ENCODE measurements at regions of chr19 and their contacts with region 1.

Region 1: GRCh38 chr19:35204799-35205732 is 23.5 kb downstream of the FAM187B start:
- DNase-seq: peak; percentile 52
- ATAC-seq: peak; percentile 75
- H3K4me3 Mint-ChIP-seq: peak overlapping the region; percentile 68
- H3K27ac Mint-ChIP-seq: peak overlapping the region; percentile 98
- H3K4me1 Mint-ChIP-seq: peaks cover 78% of the 10 kb centered on the region
- H3K27me3 Mint-ChIP-seq: no peaks in the 10 kb centered on the region
- CTCF ChIP-seq: no peak

Region 2: GRCh38 chr19:35167251-35167721 is 37.8 kb before region 1 on chr19:
- CTCF ChIA-PET with region 1: no interaction called
- POLR2A ChIA-PET with region 1: interaction called, 4 read pairs
- intact Hi-C with region 1: loop called (anchors 5 kb)
- DNase-seq: no peak
- ATAC-seq: peak; percentile 31
- H3K4me3 Mint-ChIP-seq: peak overlapping the region; percentile 12
- H3K27ac Mint-ChIP-seq: peak overlapping the region; percentile 88
- H3K4me1 Mint-ChIP-seq: peaks cover 34% of the 10 kb centered on the region
- H3K27me3 Mint-ChIP-seq: no peaks in the 10 kb centered on the region
- CTCF ChIP-seq: no peak

Region 3: DNA sequence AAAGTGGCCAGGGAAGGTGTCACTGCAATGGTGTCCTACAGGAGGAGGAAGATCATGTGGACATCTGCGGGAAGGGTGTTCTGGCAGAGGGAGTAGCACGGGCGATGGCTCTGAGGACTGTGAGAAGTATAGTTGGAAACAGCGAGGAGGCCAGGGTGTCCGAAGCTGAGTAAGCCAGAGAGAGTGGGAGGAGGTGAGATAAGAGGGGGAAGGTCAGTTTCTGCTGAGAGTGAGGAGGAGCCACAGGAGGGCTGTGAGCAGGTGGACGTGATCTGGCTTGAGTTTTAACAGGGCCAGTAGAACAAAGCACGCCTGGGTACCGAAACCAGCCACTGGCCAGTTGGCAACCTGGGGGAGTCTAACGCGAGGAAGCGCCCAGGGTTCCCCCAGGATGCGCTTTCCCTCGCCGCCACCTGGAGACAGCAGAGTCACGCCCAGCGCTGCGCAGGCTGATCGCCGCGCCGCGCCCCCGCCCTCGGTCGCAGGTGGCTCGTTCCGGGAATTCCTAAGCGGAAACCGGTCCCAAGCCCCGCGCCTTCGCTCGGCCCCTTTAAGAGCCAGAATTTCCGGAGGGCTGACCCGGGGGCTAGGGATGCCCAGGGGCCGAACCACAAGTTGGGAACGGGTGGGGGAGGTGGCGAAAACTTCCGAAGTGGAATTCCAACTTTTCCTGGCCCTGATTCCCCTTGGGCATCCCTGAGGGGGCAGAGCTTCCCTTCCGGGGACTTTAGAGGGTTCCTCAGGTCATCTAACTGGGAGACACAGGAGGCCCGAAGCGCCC is 42.6 kb after region 1 on chr19:
- CTCF ChIA-PET with region 1: no interaction called
- POLR2A ChIA-PET with region 1: interaction called, 7 read pairs
- intact Hi-C with region 1: loop called (anchors 1 kb)
- DNase-seq: peak; percentile 59
- ATAC-seq: peak; percentile 52
- H3K4me3 Mint-ChIP-seq: peak overlapping the region; percentile 91
- H3K27ac Mint-ChIP-seq: peak overlapping the region; percentile 93
- H3K4me1 Mint-ChIP-seq: peaks cover 31% of the 10 kb centered on the region
- H3K27me3 Mint-ChIP-seq: peaks cover 2% of the 10 kb centered on the region
- CTCF ChIP-seq: no peak

Measured in activated B cell treated with CpG ODN at 0.5 μM for 24 hours (primary cell).